Activated T-helper 1 cell treated with anti-CD3 and anti-CD28 coated beads, Interleukin-12 subunit alpha, Interleukin-12 subunit beta, Interleukin-2, Interleukin-4 antibody, amounts not matched to agents 30 ng/mL and 10 ng/mL and 1 ng/mL, durations not matched to agents 14 hours and 24 hours and 36 hours (primary cell): ENCODE measurements at regions of chrX and their contacts with region 1.

Region 1: GRCh38 chrX:47217642-47218279 is 720 bp upstream of the CDK16 start:
- DNase-seq: peak; percentile 92
- H3K4me3 Mint-ChIP-seq: peak overlapping the region; percentile 90
- H3K27ac Mint-ChIP-seq: peak overlapping the region; percentile 97
- H3K4me1 Mint-ChIP-seq: peaks cover 41% of the 10 kb centered on the region
- H3K27me3 Mint-ChIP-seq: no peaks in the 10 kb centered on the region

Region 2: DNA sequence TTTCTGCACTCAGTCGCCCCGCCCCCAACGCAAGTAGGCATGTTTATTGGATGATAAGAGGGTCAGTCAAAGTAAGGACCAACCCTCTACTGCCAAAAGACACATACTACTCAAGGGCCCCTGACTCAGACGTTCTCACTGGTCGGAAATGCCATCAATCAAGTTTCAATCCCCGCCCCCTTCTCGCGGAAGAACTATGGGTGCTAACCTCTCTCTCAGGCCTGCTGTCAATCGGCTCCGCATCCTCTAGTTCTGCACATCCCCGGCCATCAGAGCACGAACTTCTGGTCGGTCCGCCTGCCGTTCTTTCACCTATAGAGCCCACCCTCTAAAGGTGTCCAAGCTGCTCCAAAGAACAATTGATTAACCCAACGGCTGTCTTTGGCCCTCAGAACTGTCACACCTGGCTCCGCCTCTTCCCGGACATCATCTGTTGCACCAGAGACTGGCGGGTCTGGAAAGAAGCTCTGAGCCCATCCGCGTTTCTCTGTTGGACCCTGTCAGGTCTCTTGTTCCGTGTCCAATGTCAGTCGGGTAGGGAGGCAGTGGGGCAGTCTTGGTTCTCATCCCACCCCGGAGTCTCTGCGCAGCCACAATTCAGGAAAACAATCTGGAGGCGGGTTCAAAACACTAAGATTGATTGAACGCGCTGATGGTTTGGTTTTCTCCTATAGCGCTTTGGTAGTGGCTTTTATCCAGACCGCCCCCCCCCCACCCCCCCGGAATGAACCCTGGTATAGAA is 88.4 kb before region 1 on chrX:
- intact Hi-C with region 1: loop called (anchors 1 kb)
- DNase-seq: peak; percentile 86
- H3K4me3 Mint-ChIP-seq: peak overlapping the region; percentile 97
- H3K27ac Mint-ChIP-seq: peak overlapping the region; percentile 98
- H3K4me1 Mint-ChIP-seq: no peaks in the 10 kb centered on the region
- H3K27me3 Mint-ChIP-seq: no peaks in the 10 kb centered on the region

Region 3: DNA sequence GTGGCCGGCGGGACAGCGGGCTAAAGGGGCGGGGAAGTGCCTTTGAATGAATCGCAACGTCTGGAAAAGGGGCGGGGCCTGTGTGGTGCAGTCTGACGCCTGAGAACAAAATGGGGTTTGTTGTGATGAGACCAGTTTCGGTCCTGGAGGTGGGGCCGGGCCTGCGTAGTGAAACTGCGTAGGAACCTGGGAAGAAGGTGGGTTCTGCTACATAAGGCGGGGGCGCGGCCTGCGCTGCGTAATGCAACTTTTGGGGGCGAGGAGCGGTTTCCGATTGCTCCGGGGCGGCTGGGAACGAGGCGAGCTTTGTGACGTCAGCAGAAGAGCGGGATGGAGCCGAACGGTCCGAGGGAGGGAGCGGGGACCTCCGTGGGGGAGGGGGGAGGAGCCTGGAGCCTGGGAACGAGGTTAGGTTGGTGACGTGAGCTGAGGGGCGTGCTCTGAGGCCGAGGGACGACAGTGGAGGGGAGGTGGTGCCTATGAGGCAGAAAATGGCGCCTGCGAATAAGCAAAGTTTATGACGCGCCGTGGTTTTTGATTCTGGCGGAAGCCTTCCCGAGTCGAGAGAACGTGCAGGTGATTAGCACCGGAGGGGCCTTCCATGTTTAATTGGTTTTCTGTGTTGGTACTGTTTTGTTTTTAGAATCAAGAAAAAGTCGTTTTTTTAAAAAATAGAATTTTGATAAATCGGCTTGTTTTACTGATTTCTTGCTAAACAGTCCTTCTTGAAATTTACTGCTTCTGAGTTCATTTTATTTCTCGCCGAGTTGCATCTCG is 15.8 kb after region 1 on chrX:
- intact Hi-C with region 1: loop called (anchors 1 kb)
- DNase-seq: peak; percentile 87
- H3K4me3 Mint-ChIP-seq: peak overlapping the region; percentile 87
- H3K27ac Mint-ChIP-seq: peak overlapping the region; percentile 90
- H3K4me1 Mint-ChIP-seq: peaks cover 19% of the 10 kb centered on the region
- H3K27me3 Mint-ChIP-seq: no peaks in the 10 kb centered on the region

Region 4: GRCh38 chrX:47523297-47523696 is 305.5 kb after region 1 on chrX:
- intact Hi-C with region 1: loop called (anchors 1 kb)
- DNase-seq: peak; percentile 69
- H3K4me3 Mint-ChIP-seq: peak overlapping the region; percentile 70
- H3K27ac Mint-ChIP-seq: no peak overlapping the region
- H3K4me1 Mint-ChIP-seq: no peaks in the 10 kb centered on the region
- H3K27me3 Mint-ChIP-seq: no peaks in the 10 kb centered on the region